ENCODE measurements at regions of chr1 and their contacts with region 1.

Region 1: DNA sequence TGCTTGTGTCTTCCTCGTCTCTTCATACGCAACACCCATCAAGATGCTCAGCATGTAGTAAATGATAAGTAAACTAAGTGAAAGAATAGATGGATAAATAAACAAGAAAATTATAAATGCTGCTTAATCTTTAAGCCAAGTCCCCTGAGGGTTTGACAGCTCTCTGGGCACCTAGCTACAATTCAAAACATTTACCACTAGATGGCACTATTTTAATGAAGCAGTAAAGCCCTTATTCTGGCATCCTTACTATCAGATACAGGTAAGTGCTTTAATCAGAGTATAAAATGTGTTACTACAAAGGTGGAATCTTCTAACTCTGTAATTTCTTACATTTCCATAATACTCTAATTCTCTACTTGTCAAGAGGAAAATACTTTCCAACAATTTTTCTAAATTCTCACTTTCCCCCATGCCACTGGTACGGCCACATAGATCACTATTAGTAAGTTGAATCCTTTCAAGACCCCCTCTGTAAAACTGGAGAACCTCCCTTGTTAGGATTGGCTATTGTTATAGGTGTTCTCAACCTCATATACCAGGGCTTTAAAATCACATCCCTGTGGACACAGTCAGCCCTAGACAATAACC is 137.8 kb downstream of the BARHL2 start:
- DNase-seq: no peak
- ATAC-seq: no peak
- H3K4me3 Mint-ChIP-seq: no peak overlapping the region
- H3K27ac Mint-ChIP-seq: no peak overlapping the region
- H3K4me1 Mint-ChIP-seq: no peaks in the 10 kb centered on the region
- H3K27me3 Mint-ChIP-seq: peaks cover 1% of the 10 kb centered on the region
- CTCF ChIP-seq: peak; percentile 75

Region 2: GRCh38 chr1:90357995-90358394 is 221.3 kb before region 1 on chr1:
- CTCF ChIA-PET with region 1: no interaction called
- POLR2A ChIA-PET with region 1: no interaction called
- intact Hi-C with region 1: no loop called
- DNase-seq: no peak
- ATAC-seq: no peak
- H3K4me3 Mint-ChIP-seq: no peak overlapping the region
- H3K27ac Mint-ChIP-seq: no peak overlapping the region
- H3K4me1 Mint-ChIP-seq: no peaks in the 10 kb centered on the region
- H3K27me3 Mint-ChIP-seq: peaks cover 1% of the 10 kb centered on the region
- CTCF ChIP-seq: no peak

Region 3: DNA sequence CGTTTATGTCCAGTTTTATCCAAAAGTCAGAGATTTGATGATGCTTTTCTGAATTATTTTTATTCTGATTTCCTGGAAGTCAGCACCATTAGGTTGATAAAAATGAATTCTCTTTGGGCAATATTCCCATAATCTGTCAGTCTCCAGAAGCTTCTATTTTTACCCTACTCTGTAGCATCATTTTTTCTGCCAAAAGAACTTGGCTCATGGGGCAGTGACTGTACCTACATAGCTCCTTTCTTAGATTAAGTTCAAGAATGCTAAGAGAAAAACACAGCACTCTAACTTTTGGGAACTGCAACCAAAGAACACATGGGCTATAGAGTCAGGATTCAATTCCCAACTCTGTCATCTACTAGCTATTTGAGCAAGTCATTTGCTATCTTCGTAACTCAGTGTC is 15.1 kb before region 1 on chr1:
- CTCF ChIA-PET with region 1: interaction called, 17 read pairs
- POLR2A ChIA-PET with region 1: no interaction called
- intact Hi-C with region 1: no loop called
- DNase-seq: no peak
- ATAC-seq: no peak
- H3K4me3 Mint-ChIP-seq: no peak overlapping the region
- H3K27ac Mint-ChIP-seq: no peak overlapping the region
- H3K4me1 Mint-ChIP-seq: no peaks in the 10 kb centered on the region
- H3K27me3 Mint-ChIP-seq: peaks cover 2% of the 10 kb centered on the region
- CTCF ChIP-seq: no peak

Region 4: GRCh38 chr1:90748668-90749067 is 169.4 kb after region 1 on chr1:
- CTCF ChIA-PET with region 1: no interaction called
- POLR2A ChIA-PET with region 1: no interaction called
- intact Hi-C with region 1: no loop called
- DNase-seq: no peak
- ATAC-seq: no peak
- H3K4me3 Mint-ChIP-seq: no peak overlapping the region
- H3K27ac Mint-ChIP-seq: no peak overlapping the region
- H3K4me1 Mint-ChIP-seq: no peaks in the 10 kb centered on the region
- H3K27me3 Mint-ChIP-seq: peaks cover 26% of the 10 kb centered on the region
- CTCF ChIP-seq: no peak

Region 5: GRCh38 chr1:90761781-90762589 is 182.7 kb after region 1 on chr1:
- CTCF ChIA-PET with region 1: no interaction called
- POLR2A ChIA-PET with region 1: no interaction called
- intact Hi-C with region 1: no loop called
- DNase-seq: no peak
- ATAC-seq: no peak
- H3K4me3 Mint-ChIP-seq: no peak overlapping the region
- H3K27ac Mint-ChIP-seq: no peak overlapping the region
- H3K4me1 Mint-ChIP-seq: peaks cover 5% of the 10 kb centered on the region
- H3K27me3 Mint-ChIP-seq: peaks cover 23% of the 10 kb centered on the region
- CTCF ChIP-seq: no peak

Measured in activated CD8-positive, alpha-beta T cell treated with anti-CD3 and anti-CD28 coated beads for 36 hours (primary cell).